ENCODE measurements at regions of chr3 and their contacts with region 1.

Region 1: DNA sequence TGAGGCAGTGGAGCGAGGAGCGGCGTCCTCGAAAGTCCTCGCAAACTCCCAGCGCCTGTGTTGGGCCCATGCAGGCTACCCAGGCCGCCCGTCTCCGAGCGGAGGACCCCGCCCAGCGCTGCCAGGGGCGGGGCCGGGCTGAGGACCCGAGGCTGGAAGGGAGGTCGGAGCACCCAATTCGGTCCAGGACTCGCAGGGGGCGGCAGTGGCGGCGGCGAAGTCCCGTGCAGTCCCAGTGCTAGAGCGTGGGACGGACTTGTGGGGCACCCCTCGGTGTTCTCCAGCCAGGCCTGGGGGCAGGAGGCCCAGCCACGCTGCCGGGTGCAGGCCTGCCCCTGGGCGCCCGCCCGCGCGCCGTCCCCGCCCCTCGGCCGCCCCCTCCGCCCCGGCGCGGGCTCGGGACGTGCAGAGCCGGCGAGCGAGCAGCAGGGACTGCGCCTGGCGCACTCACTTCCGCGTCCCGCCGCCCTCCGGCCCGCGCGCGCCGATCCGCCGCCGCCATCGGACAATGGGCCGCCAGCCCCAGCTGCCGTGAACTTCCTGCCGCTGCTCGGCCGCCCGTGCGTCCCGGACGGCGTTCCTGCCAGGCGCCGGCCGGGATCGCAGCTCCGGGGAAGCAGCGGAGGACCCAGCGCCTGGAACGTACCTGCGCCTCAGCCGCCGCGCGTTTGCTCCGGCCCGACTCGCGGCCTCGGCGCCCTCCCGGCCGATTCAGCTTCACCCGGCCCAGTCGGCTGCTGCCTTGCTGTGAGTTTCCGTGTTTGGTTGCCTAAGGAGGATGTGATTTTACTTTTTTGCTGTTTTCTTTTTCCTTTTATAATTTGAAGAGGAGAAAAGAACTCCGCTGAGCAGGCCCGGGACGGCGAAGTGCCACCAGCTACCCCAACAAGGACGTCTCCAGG is 592 bp upstream of the LIMD1 start:
- DNase-seq: peak; percentile 75
- H3K4me3 Mint-ChIP-seq: peak overlapping the region; percentile 84
- H3K27ac Mint-ChIP-seq: peak overlapping the region; percentile 74
- H3K4me1 Mint-ChIP-seq: peaks cover 49% of the 10 kb centered on the region
- H3K27me3 Mint-ChIP-seq: no peaks in the 10 kb centered on the region

Region 2: GRCh38 chr3:45612918-45613602 is 19.1 kb after region 1 on chr3:
- CTCF ChIA-PET with region 1: no interaction called
- POLR2A ChIA-PET with region 1: no interaction called
- intact Hi-C with region 1: loop called (anchors 2 kb)
- DNase-seq: no peak
- H3K4me3 Mint-ChIP-seq: no peak overlapping the region
- H3K27ac Mint-ChIP-seq: no peak overlapping the region
- H3K4me1 Mint-ChIP-seq: peaks cover 36% of the 10 kb centered on the region
- H3K27me3 Mint-ChIP-seq: no peaks in the 10 kb centered on the region

Region 3: GRCh38 chr3:45665101-45665572 is 71.2 kb after region 1 on chr3:
- CTCF ChIA-PET with region 1: interaction called, 9 read pairs
- POLR2A ChIA-PET with region 1: interaction called, 3 read pairs
- intact Hi-C with region 1: loop called (anchors 1 kb)
- DNase-seq: peak; percentile 80
- H3K4me3 Mint-ChIP-seq: peak overlapping the region; percentile 76
- H3K27ac Mint-ChIP-seq: peak overlapping the region; percentile 83
- H3K4me1 Mint-ChIP-seq: peaks cover 51% of the 10 kb centered on the region
- H3K27me3 Mint-ChIP-seq: no peaks in the 10 kb centered on the region